ENCODE measurements at regions of chr12 and their contacts with region 1.

Region 1: GRCh38 chr12:95117178-95117599 is 43.8 kb upstream of the NR2C1 start:
- DNase-seq: no peak
- ATAC-seq: peak; percentile 92

Region 2: GRCh38 chr12:94889445-94890210 is 227.6 kb before region 1 on chr12:
- intact Hi-C with region 1: no loop called
- DNase-seq: no peak
- ATAC-seq: no peak

Region 3: DNA sequence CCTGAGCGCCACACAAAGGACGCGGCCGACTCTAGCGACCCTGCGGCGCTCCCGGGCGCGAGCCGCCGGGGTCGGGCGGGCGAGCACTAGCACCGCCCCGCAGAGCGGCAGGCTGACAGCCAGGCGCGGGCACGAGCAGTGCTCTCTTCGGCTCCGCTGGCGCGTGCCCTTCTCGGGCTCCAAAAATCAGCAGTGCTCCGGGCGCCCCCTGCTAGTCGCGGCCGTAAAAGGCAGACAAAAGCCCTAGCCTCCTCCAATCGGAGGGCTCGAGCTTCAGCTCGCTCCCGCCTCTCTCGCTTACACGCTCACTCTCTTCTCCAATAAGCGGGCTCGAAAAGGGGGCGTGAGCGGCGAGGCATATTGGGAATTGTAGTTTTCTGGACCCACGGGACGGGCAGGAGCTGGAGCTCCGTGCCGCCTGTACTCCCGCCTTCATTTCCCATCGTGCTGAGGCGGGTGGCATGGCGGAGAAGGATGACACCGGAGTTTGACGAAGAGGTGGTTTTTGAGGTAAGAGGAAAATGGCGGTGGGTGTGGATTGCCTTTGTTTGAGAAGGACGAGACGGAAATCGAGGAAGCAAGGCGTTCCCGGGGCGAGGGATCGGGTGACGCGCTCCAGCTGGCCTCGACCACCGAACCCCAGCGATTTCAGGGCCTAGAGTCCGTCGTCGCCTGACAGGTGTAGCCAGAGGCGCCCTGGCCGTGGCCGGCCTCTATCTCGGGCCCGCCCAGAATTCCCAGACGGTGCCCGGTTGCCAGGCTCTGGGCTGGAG is 100.4 kb after region 1 on chr12 and contains the starts of genes FGD6 and VEZT:
- intact Hi-C with region 1: loop called (anchors 5 kb)
- DNase-seq: peak; percentile 99
- ATAC-seq: peak; percentile 95
- total RNA-seq, gene FGD6: 23.5 TPM
- total RNA-seq, gene VEZT: 59.0 TPM

Region 4: DNA sequence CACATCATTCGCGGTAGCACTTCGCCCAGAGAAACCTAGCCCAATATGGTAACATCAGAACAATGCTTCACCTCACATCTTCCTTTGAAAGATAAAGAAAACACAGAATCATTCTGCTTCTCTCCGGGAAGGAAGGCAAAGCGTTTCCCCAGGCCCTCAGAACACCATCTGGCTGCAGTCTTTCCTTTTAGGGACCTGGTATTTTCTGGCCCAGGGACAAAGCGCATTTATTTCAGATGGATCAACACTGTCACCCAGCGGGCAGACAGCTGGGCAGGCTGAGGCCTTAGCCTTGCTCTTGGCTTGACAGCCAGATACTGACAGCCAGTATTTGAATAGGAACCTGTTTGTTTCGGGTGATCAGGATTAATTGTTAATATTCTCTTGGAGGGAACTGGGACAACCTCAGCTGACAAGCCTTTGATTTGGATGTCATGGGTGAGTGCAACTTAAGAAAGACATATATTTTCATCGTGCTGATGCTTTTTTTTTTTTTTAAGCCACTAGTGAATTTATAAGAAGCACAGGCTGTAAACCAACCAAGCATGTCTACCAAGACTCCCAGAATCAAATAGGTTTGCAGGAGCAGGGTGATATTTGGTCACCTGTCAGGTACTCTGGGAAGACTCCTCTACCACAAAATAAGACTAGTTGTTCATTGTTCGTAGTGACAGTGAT is 219.3 kb after region 1 on chr12:
- intact Hi-C with region 1: loop called (anchors 2 kb)
- DNase-seq: peak; percentile 68
- ATAC-seq: peak; percentile 89

Region 5: DNA sequence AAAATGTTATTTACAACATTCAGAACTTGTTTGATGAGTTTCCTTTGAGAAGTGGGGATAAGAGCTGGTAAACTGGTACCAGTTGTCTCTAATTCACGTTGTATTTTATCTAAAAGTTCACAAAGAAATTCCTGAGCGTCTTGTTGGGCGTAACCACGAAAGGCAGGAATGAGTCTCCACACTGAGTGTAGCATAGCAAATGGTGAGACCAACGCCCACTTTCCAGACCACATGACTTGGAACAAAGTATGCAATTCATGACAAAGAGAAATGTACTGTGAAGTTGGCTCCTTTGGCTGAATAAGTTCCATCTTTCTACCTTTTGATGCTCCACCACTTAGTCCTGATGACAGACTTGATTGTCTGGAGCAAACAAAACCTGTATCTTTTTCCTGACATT is 415.7 kb after region 1 on chr12:
- intact Hi-C with region 1: loop called (anchors 5 kb)
- DNase-seq: no peak
- ATAC-seq: no peak

Measured in left ventricle myocardium superior (tissue), 1 donor.